Caco-2 (cell line): ENCODE measurements at regions of chr1 and their contacts with region 1.

Region 1: DNA sequence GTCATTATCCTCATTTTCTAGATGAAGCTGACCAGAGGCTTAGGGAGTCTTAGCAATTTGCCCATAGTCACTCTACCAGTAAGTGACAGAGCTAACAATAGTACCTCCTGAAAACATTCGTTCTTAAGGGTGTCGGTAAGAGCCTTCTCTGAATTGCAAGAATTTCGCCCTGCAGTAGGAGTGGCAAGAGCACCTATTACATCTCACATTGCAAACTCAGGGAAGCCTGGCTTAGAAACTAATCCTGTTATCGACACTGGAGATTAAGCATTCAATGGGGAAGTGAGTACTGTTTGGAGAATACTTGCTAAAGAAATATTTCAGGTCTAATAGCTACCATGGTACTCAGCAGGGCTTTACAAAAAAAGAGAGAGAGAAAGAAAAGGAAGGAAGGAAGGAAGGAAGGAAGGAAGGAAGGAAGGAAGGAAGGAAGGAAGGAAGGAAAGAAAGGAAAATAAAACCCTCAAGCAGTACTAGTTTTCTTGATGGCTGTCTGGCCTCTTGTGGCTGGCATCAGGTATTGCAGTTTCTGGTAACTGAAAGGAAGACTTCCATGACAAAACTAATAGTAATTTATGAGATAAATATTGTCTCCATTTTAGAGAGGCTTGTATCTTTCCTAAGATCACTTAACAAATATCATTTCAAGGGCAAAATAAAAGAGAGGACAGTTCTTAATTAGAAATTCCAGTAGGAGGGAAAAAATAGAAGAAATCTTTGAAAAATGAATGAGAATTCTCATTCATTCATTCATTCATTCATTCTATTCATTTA is 10.4 kb downstream of the C1orf226 start:
- DNase-seq: peak in 1 of 2 experiments; percentile 42
- H3K4me3 ChIP-seq: no peak overlapping the region
- H3K4me3 Mint-ChIP-seq: peak overlapping the region; percentile 4
- H3K27ac Mint-ChIP-seq: no peak overlapping the region
- H3K4me1 ChIP-seq: peaks cover 8% of the 10 kb centered on the region
- H3K4me1 Mint-ChIP-seq: peaks cover 14% of the 10 kb centered on the region
- H3K27me3 ChIP-seq: no peaks in the 10 kb centered on the region
- H3K27me3 Mint-ChIP-seq: peaks cover 8% of the 10 kb centered on the region
- CTCF ChIP-seq: peak; percentile 64 to 88

Region 2: DNA sequence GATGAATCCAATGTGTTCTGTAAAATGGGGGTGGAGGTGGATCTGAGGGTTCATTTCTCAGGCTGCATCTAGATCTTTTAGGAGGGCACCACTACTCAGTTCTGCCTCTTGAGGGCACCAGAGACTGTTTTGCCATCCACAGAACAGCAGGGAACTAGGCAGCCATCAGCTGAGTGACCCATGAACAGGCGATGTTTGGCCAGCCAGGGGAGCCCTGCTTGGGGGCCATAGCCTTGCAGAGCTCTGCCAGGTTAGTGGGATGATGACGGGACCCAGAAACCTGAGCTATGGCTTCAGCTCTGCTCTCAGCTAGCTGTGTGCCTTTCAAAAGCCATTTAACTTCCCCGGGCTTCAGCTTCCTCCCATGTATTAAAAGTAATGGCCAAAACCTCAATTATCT is 335.9 kb before region 1 on chr1:
- CTCF ChIA-PET with region 1: interaction called, 3 read pairs
- POLR2A ChIA-PET with region 1: no interaction called
- intact Hi-C with region 1: loop called (anchors 1 kb)
- DNase-seq: peak; percentile 75 to 79
- H3K4me3 ChIP-seq: no peak overlapping the region
- H3K4me3 Mint-ChIP-seq: no peak overlapping the region
- H3K27ac Mint-ChIP-seq: no peak overlapping the region
- H3K4me1 ChIP-seq: no peaks in the 10 kb centered on the region
- H3K4me1 Mint-ChIP-seq: peaks cover 7% of the 10 kb centered on the region
- H3K27me3 ChIP-seq: no peaks in the 10 kb centered on the region
- H3K27me3 Mint-ChIP-seq: peaks cover 3% of the 10 kb centered on the region
- CTCF ChIP-seq: peak; percentile 91 to 95

Region 3: GRCh38 chr1:162193815-162194214 is 198.2 kb before region 1 on chr1:
- CTCF ChIA-PET with region 1: no interaction called
- POLR2A ChIA-PET with region 1: no interaction called
- intact Hi-C with region 1: loop called (anchors 10 kb)
- DNase-seq: no peak
- H3K4me3 ChIP-seq: no peak overlapping the region
- H3K4me3 Mint-ChIP-seq: no peak overlapping the region
- H3K27ac Mint-ChIP-seq: no peak overlapping the region
- H3K4me1 ChIP-seq: peaks cover 69% of the 10 kb centered on the region
- H3K4me1 Mint-ChIP-seq: peaks cover 26% of the 10 kb centered on the region
- H3K27me3 ChIP-seq: no peaks in the 10 kb centered on the region
- H3K27me3 Mint-ChIP-seq: no peaks in the 10 kb centered on the region
- CTCF ChIP-seq: no peak

Region 4: DNA sequence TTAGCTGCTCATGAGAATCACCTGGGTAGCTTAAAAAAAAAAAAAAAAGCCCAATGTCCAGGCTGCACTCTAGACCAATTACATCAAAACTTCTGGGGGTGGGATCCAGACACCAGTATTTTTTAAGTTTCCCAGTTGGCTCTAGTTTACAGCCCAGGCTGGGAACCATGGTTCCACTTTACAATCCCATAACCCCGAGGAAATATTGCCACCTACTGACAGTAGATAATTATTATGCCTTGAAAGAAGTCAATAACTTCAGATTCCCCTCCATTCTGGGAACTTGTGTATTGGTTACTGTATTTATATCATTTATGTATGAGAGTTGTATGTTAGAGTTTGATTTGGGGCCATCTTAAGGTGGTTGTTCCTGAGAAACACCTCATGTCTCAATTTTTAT is 115.5 kb before region 1 on chr1:
- CTCF ChIA-PET with region 1: no interaction called
- POLR2A ChIA-PET with region 1: interaction called, 3 read pairs
- intact Hi-C with region 1: loop called (anchors 2 kb)
- DNase-seq: peak in 1 of 2 experiments; percentile 48
- H3K4me3 ChIP-seq: no peak overlapping the region
- H3K4me3 Mint-ChIP-seq: no peak overlapping the region
- H3K27ac Mint-ChIP-seq: no peak overlapping the region
- H3K4me1 ChIP-seq: no peaks in the 10 kb centered on the region
- H3K4me1 Mint-ChIP-seq: no peaks in the 10 kb centered on the region
- H3K27me3 ChIP-seq: no peaks in the 10 kb centered on the region
- H3K27me3 Mint-ChIP-seq: no peaks in the 10 kb centered on the region
- CTCF ChIP-seq: peak; percentile 50 to 51

Region 5: DNA sequence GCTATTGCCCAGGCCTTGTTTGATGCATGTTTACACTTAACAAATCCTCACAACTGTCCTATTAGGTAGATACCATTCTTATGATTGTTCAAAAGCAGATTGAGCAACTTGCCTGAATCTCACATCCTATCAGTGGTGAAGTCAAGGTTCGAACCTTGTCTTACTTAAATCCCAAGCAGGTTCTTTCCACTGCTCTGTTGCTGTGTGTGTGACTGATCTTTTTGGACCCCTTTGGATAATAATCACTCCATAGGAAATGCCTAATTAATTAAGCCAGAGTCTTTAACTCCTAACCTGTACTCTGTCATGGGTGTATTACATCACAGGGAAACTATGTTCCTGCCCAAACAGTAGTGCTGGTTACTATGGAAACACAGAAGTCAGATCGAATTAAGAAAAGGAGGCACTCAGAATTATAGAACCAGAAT is 99.5 kb before region 1 on chr1:
- CTCF ChIA-PET with region 1: no interaction called
- POLR2A ChIA-PET with region 1: no interaction called
- intact Hi-C with region 1: no loop called
- DNase-seq: no peak
- H3K4me3 ChIP-seq: no peak overlapping the region
- H3K4me3 Mint-ChIP-seq: no peak overlapping the region
- H3K27ac Mint-ChIP-seq: no peak overlapping the region
- H3K4me1 ChIP-seq: no peaks in the 10 kb centered on the region
- H3K4me1 Mint-ChIP-seq: no peaks in the 10 kb centered on the region
- H3K27me3 ChIP-seq: no peaks in the 10 kb centered on the region
- H3K27me3 Mint-ChIP-seq: no peaks in the 10 kb centered on the region
- CTCF ChIP-seq: no peak

Region 6: GRCh38 chr1:162357681-162358266 is 34.2 kb before region 1 on chr1:
- CTCF ChIA-PET with region 1: interaction called, 14 read pairs
- POLR2A ChIA-PET with region 1: no interaction called
- intact Hi-C with region 1: loop called (anchors 1 kb)
- DNase-seq: peak in 1 of 2 experiments; percentile 61
- H3K4me3 ChIP-seq: no peak overlapping the region
- H3K4me3 Mint-ChIP-seq: no peak overlapping the region
- H3K27ac Mint-ChIP-seq: no peak overlapping the region
- H3K4me1 ChIP-seq: no peaks in the 10 kb centered on the region
- H3K4me1 Mint-ChIP-seq: peaks cover 9% of the 10 kb centered on the region
- H3K27me3 ChIP-seq: no peaks in the 10 kb centered on the region
- H3K27me3 Mint-ChIP-seq: no peaks in the 10 kb centered on the region
- CTCF ChIP-seq: peak; percentile 65 to 73

Region 7: GRCh38 chr1:162381383-162381782 is 10.6 kb before region 1 on chr1 and contains the start of gene C1orf226:
- CTCF ChIA-PET with region 1: interaction called, 10 read pairs
- POLR2A ChIA-PET with region 1: interaction called, 3 read pairs
- intact Hi-C with region 1: no loop called
- DNase-seq: peak; percentile 83 to 85
- H3K4me3 ChIP-seq: no peak within 1 kb of the TSS
- H3K4me3 Mint-ChIP-seq: peak within 1 kb of the TSS; percentile 25
- H3K27ac Mint-ChIP-seq: peak within 1 kb of the TSS; percentile 93
- H3K4me1 ChIP-seq: peaks cover 39% of the 10 kb centered on the region
- H3K4me1 Mint-ChIP-seq: peaks cover 20% of the 10 kb centered on the region
- H3K27me3 ChIP-seq: no peaks in the 10 kb centered on the region
- H3K27me3 Mint-ChIP-seq: no peaks in the 10 kb centered on the region
- CTCF ChIP-seq: no peak
- total RNA-seq, gene C1orf226: 5.3 and 7.3 TPM in 2 replicates

Region 8: DNA sequence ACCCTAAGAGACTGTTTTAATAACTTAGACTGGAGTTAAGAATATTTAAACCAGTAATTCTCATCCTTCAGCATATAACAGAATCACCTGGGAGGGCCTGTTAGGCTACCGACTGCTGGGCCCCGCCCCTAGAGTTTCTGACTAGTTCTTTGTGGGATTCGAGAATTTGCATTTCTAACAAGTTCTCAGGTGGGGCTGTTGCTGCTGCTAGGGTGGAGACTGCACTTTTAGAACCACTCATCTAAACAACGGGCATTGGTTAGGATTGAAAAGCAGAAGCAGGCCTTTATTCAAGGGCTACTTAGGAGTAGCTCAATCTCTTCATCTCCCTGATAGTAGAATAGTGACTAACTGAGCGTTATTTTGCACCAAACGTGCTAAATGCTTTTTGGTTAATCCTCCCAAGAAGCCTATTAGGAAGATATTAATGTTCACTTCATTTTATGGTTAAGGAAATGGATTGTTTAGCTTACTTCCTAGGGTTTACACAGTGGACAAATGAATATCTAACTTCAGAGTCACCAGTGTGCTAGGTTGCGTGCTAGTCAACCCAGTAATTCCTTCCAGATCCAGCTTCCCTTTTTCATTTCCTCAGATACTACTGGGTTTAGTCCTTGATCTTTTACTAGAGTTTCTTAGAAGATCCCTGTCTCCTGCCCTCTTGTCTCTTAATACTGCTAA is 138.5 kb after region 1 on chr1:
- CTCF ChIA-PET with region 1: no interaction called
- POLR2A ChIA-PET with region 1: no interaction called
- intact Hi-C with region 1: no loop called
- DNase-seq: no peak
- H3K4me3 ChIP-seq: no peak overlapping the region
- H3K4me3 Mint-ChIP-seq: no peak overlapping the region
- H3K27ac Mint-ChIP-seq: no peak overlapping the region
- H3K4me1 ChIP-seq: no peaks in the 10 kb centered on the region
- H3K4me1 Mint-ChIP-seq: no peaks in the 10 kb centered on the region
- H3K27me3 ChIP-seq: no peaks in the 10 kb centered on the region
- H3K27me3 Mint-ChIP-seq: no peaks in the 10 kb centered on the region
- CTCF ChIP-seq: no peak